Left ventricle myocardium superior (tissue), 1 donor: ENCODE measurements at regions of chr10 and their contacts with region 1.

Region 1: DNA sequence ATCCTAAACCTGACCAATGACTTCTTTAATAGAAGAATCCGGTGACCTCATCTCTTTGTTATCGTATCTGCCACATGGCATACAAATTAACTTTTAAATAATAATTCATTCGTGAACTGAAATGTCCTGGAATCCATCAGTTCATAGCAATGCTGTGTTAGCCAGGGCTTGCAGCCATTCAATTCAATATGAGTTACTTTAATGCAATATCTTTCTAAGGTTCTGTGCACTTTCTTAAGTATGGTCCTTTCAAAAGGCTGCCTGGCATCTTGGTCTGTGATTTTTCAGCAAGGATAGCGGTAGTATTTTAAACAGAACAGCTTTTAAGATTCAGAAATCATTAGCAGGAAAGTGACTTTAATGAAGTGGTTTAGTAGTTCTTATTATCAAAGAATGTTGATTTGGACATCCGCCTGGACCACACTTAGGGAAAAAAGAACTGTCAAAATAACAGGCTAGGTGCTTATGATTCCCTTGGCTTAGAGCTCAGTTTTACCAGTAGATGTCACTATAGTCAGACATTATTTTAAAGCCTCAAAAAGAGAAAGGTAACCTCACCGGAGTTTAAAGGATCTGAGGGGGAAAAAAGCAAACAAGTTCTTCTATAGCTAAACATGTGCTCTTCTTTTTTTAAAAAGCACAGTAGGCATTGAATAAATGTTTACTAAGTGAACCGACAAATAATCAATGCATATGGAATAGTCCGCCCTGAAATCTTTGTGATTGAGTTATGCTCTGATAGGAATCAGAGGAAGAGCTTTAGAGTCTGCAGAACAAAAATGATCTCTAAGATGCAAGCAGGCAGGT is 22.7 kb downstream of the SLC35G1 start:
- DNase-seq: no peak
- ATAC-seq: peak; percentile 76

Region 2: DNA sequence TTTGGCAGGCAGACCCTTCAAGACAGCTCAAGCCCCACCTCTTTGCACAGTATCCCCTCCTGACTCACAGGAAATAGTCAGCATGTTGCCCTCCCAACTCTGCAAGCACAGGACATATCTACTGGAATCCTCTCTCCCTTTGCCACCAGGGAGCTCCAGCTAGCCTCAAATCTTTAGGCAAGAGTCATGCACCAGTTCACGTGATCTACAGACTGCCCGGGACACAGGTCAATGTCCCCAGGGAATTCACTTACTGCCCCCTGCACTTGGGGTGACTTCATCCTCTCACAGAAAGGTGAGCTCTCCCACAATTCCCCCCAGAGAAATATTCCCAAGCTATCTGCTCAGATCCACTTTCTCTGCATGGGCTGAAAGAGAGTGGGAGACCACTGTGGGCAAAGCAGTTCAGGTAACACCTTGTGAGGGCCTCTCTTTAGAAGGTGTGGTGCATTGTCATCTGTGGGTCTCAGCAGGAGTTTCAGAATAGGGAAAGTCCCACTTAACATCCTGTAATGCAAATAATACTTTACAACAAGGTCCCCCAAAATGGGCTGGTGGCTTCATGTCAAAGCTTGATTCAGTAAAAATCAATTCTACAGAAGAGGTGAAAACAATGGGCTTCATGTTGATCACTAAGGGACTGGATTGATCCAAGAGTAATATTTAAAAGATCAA is 316.4 kb after region 1 on chr10:
- intact Hi-C with region 1: loop called (anchors 10 kb)
- DNase-seq: no peak
- ATAC-seq: no peak

Region 3: GRCh38 chr10:94320285-94320914 is 403.9 kb after region 1 on chr10:
- intact Hi-C with region 1: loop called (anchors 2 kb)
- DNase-seq: peak; percentile 70
- ATAC-seq: peak; percentile 59